Activated T-helper 1 cell treated with anti-CD3 and anti-CD28 coated beads, Interleukin-12 subunit alpha, Interleukin-12 subunit beta, Interleukin-2, Interleukin-4 antibody, amounts not matched to agents 30 ng/mL and 10 ng/mL and 1 ng/mL, durations not matched to agents 14 hours and 24 hours and 36 hours (primary cell): ENCODE measurements at regions of chr10 and their contacts with region 1.

Region 1: GRCh38 chr10:122435212-122435827 is 19.1 kb upstream of the ARMS2 start:
- DNase-seq: no peak
- H3K4me3 Mint-ChIP-seq: no peak overlapping the region
- H3K27ac Mint-ChIP-seq: no peak overlapping the region
- H3K4me1 Mint-ChIP-seq: no peaks in the 10 kb centered on the region
- H3K27me3 Mint-ChIP-seq: no peaks in the 10 kb centered on the region

Region 2: DNA sequence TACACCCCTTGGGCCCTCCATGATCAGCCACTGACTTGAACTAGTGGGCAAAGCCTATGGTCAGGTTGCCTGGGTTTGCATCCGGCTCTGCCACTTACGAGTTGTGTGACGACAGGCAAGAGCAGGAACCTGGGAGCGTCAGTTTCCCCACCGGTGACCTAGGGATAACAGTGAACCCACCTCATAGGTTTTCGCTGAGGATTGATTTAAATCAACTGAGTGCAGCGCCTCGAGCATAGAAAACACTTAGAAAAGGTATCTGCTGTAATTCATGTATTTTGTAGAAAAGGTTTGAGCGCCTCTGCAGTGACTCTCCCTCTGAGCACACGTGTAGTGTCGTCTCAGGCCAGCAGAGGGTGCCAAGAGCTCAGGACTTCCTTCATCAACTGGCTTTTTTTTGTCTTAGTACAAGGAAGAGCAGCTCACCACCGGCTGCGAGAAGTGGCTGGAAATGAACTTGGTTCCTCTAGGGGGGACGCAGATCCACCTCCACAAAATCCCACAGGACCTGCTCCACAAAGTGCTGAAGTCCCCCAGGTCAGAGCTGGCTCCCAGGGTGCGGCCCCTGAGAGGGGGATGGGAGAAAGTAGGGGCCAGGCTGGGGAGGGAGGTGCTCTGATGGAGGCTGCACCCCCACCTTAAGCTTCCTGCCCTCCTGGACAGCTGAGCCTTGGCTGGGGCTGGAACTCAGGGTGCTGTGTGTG is 136.6 kb before region 1 on chr10:
- intact Hi-C with region 1: loop called (anchors 1 kb)
- DNase-seq: peak; percentile 19
- H3K4me3 Mint-ChIP-seq: no peak overlapping the region
- H3K27ac Mint-ChIP-seq: no peak overlapping the region
- H3K4me1 Mint-ChIP-seq: peaks cover 9% of the 10 kb centered on the region
- H3K27me3 Mint-ChIP-seq: peaks cover 9% of the 10 kb centered on the region

Region 3: DNA sequence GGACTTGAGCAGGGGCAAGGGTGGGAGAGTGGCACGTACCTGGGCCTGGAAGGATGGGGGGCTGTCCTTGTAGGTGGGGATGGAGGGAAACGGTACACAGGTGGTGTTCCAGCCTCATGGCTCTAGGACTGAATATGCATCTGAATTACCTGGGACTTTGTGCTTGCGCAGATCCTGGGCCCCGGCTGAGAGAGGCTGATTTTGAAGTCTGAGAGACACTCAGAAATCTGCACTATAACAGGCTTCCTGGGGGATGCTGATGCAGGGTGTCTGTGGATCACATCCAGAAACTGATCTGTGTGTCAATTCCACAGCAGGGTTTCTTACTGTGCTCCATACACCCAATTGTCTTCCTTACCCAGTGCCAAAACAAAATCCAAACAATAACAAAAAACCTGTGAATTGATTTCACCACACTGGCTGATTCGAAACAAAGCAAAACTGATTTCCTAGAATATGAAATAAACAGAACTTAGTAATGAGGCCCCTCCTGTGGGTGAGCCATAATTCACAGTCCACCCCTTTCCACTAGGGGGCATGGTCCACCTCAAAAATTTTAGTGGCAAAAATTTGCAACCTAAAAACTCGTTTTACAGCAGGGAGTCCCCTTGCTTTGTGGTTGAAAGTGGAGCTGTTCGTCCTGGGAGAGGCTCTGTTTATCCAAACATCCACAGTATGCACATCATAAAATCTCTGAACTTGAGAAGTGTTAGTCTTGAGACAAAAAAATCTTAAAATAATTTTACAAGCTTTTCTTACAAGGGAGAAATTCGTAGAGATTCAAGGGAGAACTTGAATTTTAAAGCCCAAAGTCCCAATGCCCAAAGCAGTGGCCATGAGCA is 92.8 kb before region 1 on chr10:
- intact Hi-C with region 1: loop called (anchors 1 kb)
- DNase-seq: peak; percentile 12
- H3K4me3 Mint-ChIP-seq: no peak overlapping the region
- H3K27ac Mint-ChIP-seq: no peak overlapping the region
- H3K4me1 Mint-ChIP-seq: no peaks in the 10 kb centered on the region
- H3K27me3 Mint-ChIP-seq: peaks cover 12% of the 10 kb centered on the region

Region 4: DNA sequence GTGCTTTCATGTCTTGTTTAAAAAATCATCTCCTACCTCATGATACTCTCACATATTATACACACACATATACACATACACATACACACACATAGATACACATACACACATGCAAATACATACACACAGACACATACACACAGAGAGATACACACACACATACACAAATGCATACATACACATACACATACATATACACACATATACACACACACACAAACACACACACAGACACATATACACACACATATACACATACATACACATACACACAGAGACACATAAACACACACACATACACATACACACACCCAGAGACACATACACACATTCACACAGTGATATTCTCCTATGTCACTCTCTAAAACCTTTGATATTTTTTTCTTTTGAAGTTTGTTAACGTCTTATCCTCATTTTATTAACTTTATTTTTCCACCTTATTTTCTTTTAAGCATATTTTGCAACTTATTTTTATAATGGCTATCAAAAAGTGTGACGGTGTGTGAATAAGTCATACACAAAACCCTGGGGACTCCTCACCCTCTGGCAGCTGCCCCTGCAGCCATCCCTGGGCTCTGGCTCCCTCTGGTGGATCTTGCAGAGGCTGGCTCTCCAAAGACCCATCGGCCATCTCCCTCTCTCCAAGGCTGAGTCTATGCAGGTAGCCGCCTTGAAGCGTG is 268.3 kb after region 1 on chr10:
- intact Hi-C with region 1: loop called (anchors 5 kb)
- DNase-seq: peak; percentile 4
- H3K4me3 Mint-ChIP-seq: no peak overlapping the region
- H3K27ac Mint-ChIP-seq: no peak overlapping the region
- H3K4me1 Mint-ChIP-seq: no peaks in the 10 kb centered on the region
- H3K27me3 Mint-ChIP-seq: no peaks in the 10 kb centered on the region